ENCODE measurements at regions of chr12 and their contacts with region 1.

Region 1: DNA sequence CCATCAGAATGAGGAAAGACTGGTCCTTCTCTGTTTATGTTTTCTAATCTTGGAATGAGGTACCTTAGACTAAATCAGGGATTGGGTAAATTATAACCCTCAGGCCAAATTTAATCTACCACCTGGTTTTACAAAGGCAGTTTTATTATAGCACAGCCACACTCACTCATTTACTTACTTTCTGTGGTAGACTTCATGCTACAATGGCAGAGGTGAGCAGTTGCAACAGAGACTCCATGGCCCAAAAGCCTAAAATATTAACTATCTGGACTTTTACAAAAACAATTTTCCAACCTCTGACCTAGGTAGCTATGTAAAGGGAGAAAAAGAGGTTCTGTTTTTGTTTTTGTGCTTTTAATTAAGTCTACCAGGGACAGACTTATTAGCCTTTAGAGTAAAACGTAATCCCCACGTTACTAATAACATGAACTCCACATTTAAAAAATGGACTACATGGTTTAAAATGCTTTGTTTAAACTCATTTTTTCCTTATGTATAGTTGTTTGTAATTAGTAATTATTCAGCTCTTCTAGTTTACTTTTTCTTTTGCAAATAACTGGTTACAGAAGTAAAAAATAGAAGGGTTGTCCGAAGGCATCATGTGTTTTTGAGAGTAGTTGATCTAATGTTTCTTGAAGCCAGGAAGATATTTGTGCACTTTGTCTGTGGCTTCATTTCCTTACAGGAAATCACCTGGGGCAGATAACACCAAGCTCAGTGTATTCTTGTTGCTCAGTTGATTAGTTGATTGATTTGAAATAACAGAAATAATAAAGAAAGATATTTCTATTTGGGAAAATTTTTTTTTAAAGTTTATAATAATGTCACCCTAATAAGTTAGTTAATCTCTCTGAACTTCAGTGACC is 57.6 kb upstream of the ATP2B1 start:
- DNase-seq: no peak
- ATAC-seq: peak; percentile 85
- H3K4me3 ChIP-seq: no peak overlapping the region
- H3K27ac ChIP-seq: peak overlapping the region; percentile 79
- H3K4me1 ChIP-seq: peaks cover 21% of the 10 kb centered on the region
- H3K27me3 ChIP-seq: no peaks in the 10 kb centered on the region
- CTCF ChIP-seq: no peak
- EP300 ChIP-seq: peak; percentile 81 to 91
- POLR2A ChIP-seq: no peak
- RAD21 ChIP-seq: 0 out of 2 replicates have a peak, but pooled peaks have one; percentile 7

Region 2: GRCh38 chr12:89589753-89590152 is 176.4 kb before region 1 on chr12:
- CTCF ChIA-PET with region 1: no interaction called
- POLR2A ChIA-PET with region 1: no interaction called
- RAD21 ChIA-PET with region 1: no interaction called
- SMC1A ChIA-PET with region 1: no interaction called
- in situ Hi-C with region 1: no loop called
- intact Hi-C with region 1: no loop called
- DNase-seq: no peak
- ATAC-seq: no peak
- H3K4me3 ChIP-seq: no peak overlapping the region
- H3K27ac ChIP-seq: no peak overlapping the region
- H3K4me1 ChIP-seq: no peaks in the 10 kb centered on the region
- H3K27me3 ChIP-seq: no peaks in the 10 kb centered on the region
- CTCF ChIP-seq: no peak
- EP300 ChIP-seq: no peak
- POLR2A ChIP-seq: no peak
- RAD21 ChIP-seq: no peak

Region 3: GRCh38 chr12:89733579-89734201 is 32.5 kb before region 1 on chr12:
- CTCF ChIA-PET with region 1: no interaction called
- POLR2A ChIA-PET with region 1: no interaction called
- RAD21 ChIA-PET with region 1: no interaction called
- SMC1A ChIA-PET with region 1: no interaction called
- in situ Hi-C with region 1: no loop called
- intact Hi-C with region 1: no loop called
- DNase-seq: no peak
- ATAC-seq: no peak
- H3K4me3 ChIP-seq: no peak overlapping the region
- H3K27ac ChIP-seq: no peak overlapping the region
- H3K4me1 ChIP-seq: no peaks in the 10 kb centered on the region
- H3K27me3 ChIP-seq: no peaks in the 10 kb centered on the region
- CTCF ChIP-seq: no peak
- EP300 ChIP-seq: no peak
- POLR2A ChIP-seq: no peak
- RAD21 ChIP-seq: no peak

Region 4: GRCh38 chr12:89783357-89784060 is 17.3 kb after region 1 on chr12:
- CTCF ChIA-PET with region 1: interaction called, 10 read pairs
- POLR2A ChIA-PET with region 1: interaction called, 3 read pairs
- RAD21 ChIA-PET with region 1: interaction called, 5 read pairs
- SMC1A ChIA-PET with region 1: interaction called, 32 read pairs
- in situ Hi-C with region 1: no loop called
- intact Hi-C with region 1: no loop called
- DNase-seq: no peak
- ATAC-seq: peak; percentile 66
- H3K4me3 ChIP-seq: no peak overlapping the region
- H3K27ac ChIP-seq: no peak overlapping the region
- H3K4me1 ChIP-seq: peaks cover 4% of the 10 kb centered on the region
- H3K27me3 ChIP-seq: no peaks in the 10 kb centered on the region
- CTCF ChIP-seq: no peak
- EP300 ChIP-seq: no peak
- POLR2A ChIP-seq: no peak
- RAD21 ChIP-seq: no peak

Region 5: GRCh38 chr12:89838833-89839232 is 72.6 kb after region 1 on chr12:
- CTCF ChIA-PET with region 1: no interaction called
- POLR2A ChIA-PET with region 1: no interaction called
- RAD21 ChIA-PET with region 1: no interaction called
- SMC1A ChIA-PET with region 1: interaction called, 12 read pairs
- in situ Hi-C with region 1: no loop called
- intact Hi-C with region 1: no loop called
- DNase-seq: no peak
- ATAC-seq: no peak
- H3K4me3 ChIP-seq: no peak overlapping the region
- H3K27ac ChIP-seq: no peak overlapping the region
- H3K4me1 ChIP-seq: no peaks in the 10 kb centered on the region
- H3K27me3 ChIP-seq: no peaks in the 10 kb centered on the region
- CTCF ChIP-seq: no peak
- EP300 ChIP-seq: no peak
- POLR2A ChIP-seq: no peak
- RAD21 ChIP-seq: no peak

Region 6: DNA sequence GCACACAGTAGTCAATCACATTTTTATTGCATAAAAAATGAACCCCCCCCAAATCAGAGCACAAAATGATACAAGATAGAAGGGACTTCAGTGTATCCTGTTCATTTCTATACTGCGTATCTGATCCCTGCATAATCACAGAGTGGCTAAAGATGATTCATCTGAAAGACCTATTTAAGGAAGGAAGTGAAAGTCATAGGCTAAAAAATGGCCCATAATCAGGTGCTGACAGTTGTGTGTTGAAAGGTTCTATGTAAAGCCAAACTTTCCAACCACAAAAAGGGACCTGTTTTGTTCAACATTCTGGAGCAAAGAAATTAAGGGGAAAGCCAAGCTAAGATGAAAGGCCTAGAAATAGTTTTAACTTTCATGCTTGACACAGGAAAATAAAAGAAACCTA is 90.2 kb after region 1 on chr12:
- CTCF ChIA-PET with region 1: no interaction called
- POLR2A ChIA-PET with region 1: no interaction called
- RAD21 ChIA-PET with region 1: interaction called, 8 read pairs
- SMC1A ChIA-PET with region 1: interaction called, 8 read pairs
- in situ Hi-C with region 1: loop called (anchors 5 kb)
- intact Hi-C with region 1: no loop called
- DNase-seq: peak; percentile 85
- ATAC-seq: peak; percentile 90
- H3K4me3 ChIP-seq: no peak overlapping the region
- H3K27ac ChIP-seq: peak overlapping the region; percentile 42
- H3K4me1 ChIP-seq: peaks cover 43% of the 10 kb centered on the region
- H3K27me3 ChIP-seq: no peaks in the 10 kb centered on the region
- CTCF ChIP-seq: no peak
- EP300 ChIP-seq: peak; percentile 97
- POLR2A ChIP-seq: no peak
- RAD21 ChIP-seq: peak; percentile 27; the same call in 1 of the 2 replicates